Adrenal gland (tissue), 19 donors: ENCODE measurements at regions of chr5 and their contacts with region 1.

Region 1: GRCh38 chr5:116068028-116068632 is 16.7 kb upstream of the COMMD10 start:
- DNase-seq: peak in 4 of 7 donors; percentile 39 to 69 (median 50)
- H3K4me3 ChIP-seq: no peak overlapping the region
- H3K27ac ChIP-seq: no peak overlapping the region
- H3K4me1 ChIP-seq: no peaks in the 10 kb centered on the region
- H3K27me3 ChIP-seq: peaks cover 6% of the 10 kb centered on the region
- CTCF ChIP-seq: peak; percentile 69 to 94 (median 84)
- POLR2A ChIP-seq: no peak

Region 2: GRCh38 chr5:115898656-115899055 is 169.5 kb before region 1 on chr5:
- intact Hi-C with region 1: loop called in 1 of 2 experiments (anchors 10 kb)
- DNase-seq: no peak
- H3K4me3 ChIP-seq: no peak overlapping the region
- H3K27ac ChIP-seq: no peak overlapping the region
- H3K4me1 ChIP-seq: no peaks in the 10 kb centered on the region
- H3K27me3 ChIP-seq: no peaks in the 10 kb centered on the region
- CTCF ChIP-seq: no peak
- POLR2A ChIP-seq: no peak

Region 3: GRCh38 chr5:116137544-116138378 is 69.6 kb after region 1 on chr5:
- intact Hi-C with region 1: no loop called
- DNase-seq: no peak
- H3K4me3 ChIP-seq: no peak overlapping the region
- H3K27ac ChIP-seq: no peak overlapping the region
- H3K4me1 ChIP-seq: peaks cover 0 to 4% of the 10 kb centered on the region in 2 donors
- H3K27me3 ChIP-seq: no peaks in the 10 kb centered on the region
- CTCF ChIP-seq: peak; percentile 74 to 91 (median 81)
- POLR2A ChIP-seq: no peak